ENCODE measurements at regions of chr4 and their contacts with region 1.

Region 1: DNA sequence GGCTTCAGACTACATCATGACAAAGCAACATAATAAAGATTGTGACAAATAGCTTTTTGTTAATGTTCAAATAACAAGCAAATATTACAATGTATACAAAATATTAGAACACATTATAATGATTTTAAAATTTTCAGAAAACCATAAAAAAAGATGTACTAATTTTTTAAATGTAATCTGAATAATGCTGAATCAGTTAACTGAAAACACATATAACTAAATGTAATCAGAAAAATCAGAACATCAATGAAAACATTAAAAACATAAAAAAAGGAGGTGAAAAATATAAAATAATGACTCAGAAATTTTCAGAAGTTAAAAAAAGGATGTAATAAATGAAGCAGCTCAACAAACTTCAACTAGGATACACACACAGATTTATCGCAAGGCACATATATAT is 53.5 kb downstream of the ZNF721 start:
- DNase-seq: no peak
- H3K4me3 Mint-ChIP-seq: no peak overlapping the region
- H3K27ac Mint-ChIP-seq: no peak overlapping the region
- H3K4me1 Mint-ChIP-seq: no peaks in the 10 kb centered on the region
- H3K27me3 Mint-ChIP-seq: no peaks in the 10 kb centered on the region

Region 2: DNA sequence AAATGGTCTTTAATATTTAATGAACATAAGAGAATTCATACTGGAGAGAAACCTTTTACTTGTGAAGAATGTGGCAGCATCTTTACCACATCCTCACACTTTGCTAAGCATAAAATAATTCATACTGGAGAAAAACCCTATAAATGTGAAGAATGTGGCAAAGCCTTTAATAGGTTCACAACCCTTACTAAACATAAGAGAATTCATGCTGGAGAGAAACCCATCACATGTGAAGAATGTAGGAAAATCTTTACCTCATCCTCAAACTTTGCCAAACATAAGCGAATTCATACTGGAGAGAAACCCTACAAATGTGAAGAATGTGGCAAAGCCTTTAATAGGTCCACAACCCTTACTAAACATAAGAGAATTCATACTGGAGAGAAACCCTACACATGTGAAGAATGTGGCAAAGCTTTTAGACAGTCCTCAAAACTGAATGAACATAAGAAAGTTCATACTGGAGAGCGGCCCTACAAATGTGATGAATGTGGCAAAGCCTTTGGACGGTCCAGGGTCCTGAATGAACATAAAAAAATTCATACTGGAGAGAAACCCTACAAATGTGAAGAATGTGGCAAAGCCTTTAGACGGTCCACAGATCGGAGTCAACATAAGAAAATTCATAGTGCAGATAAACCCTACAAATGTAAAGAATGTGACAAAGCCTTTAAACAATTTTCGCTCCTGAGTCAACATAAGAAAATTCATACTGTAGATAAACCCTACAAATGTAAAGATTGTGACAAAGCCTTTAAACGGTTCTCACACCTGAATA is 72.2 kb before region 1 on chr4:
- intact Hi-C with region 1: loop called (anchors 10 kb)
- DNase-seq: no peak
- H3K4me3 Mint-ChIP-seq: no peak overlapping the region
- H3K27ac Mint-ChIP-seq: no peak overlapping the region
- H3K4me1 Mint-ChIP-seq: no peaks in the 10 kb centered on the region
- H3K27me3 Mint-ChIP-seq: no peaks in the 10 kb centered on the region

Region 3: GRCh38 chr4:548976-549375 is 103.6 kb after region 1 on chr4:
- intact Hi-C with region 1: no loop called
- DNase-seq: no peak
- H3K4me3 Mint-ChIP-seq: no peak overlapping the region
- H3K27ac Mint-ChIP-seq: no peak overlapping the region
- H3K4me1 Mint-ChIP-seq: no peaks in the 10 kb centered on the region
- H3K27me3 Mint-ChIP-seq: no peaks in the 10 kb centered on the region

Region 4: GRCh38 chr4:742742-743311 is 297.4 kb after region 1 on chr4:
- intact Hi-C with region 1: no loop called
- DNase-seq: peak; percentile 58
- H3K4me3 Mint-ChIP-seq: no peak overlapping the region
- H3K27ac Mint-ChIP-seq: no peak overlapping the region
- H3K4me1 Mint-ChIP-seq: no peaks in the 10 kb centered on the region
- H3K27me3 Mint-ChIP-seq: no peaks in the 10 kb centered on the region